ENCODE measurements at regions of chr3 and their contacts with region 1.

Region 1: DNA sequence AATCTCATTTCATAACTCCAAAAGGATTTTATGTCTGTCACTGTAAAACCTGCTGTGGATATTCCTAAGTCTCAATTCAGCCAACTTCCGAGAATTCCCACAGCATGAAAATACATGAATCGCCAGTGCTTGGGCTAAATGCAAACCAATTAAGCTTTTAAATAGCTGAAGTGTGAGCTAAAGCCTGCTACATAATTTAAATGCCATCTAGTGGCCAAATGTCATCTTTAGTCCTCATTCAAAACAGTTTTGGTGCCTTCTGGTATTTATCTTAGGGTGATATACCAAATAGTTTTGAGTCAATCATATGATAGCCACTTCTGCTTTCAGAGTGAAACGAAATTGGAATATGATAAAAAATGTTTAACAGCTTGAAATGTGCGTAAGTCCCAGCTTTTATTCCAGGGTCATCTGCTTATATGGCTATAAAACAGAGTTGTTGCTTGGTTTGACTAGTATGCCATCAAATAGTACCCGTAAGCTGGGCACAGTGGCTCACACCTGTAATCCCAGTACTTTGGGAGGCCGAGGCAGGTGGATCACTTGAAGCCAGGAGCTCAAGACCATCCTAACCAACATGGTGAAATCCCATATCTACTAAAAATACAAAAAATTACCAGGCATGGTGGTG is 41.8 kb upstream of the CCNL1 start:
- DNase-seq: no peak
- H3K4me3 ChIP-seq: no peak overlapping the region
- CTCF ChIP-seq: peak; percentile 25

Region 2: DNA sequence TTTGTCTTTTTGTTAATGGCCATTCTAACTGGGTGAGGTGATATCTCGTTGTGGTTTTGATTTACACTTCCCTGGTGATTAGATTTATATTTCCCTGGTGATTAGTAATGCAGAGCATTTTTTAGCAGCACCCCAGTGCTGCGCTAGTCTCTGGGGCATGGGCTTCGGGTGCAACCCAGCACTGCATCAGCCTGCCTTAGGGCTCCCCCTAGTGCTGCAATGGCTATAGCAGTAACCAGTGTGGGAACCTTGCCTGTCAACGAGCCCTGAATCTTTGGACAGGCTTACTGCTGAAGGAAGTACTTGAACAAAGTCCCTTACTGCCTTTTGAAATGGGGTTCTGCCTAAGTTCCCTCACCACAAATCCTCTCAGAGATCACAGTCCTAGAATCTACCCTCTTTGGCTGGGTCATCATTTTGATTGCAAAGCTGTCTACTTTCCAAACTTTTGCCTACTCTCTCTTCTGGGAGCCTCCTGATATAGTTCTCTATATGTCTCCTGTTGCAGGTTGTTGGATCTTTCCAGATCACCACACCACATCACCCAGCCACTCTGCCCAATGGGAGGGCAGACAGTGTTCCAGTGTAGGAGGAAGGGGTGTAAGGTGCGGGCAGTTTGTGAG is 37.4 kb after region 1 on chr3:
- CTCF ChIA-PET with region 1: interaction called, 17 read pairs
- POLR2A ChIA-PET with region 1: no interaction called
- DNase-seq: no peak
- H3K4me3 ChIP-seq: no peak overlapping the region
- CTCF ChIP-seq: peak; percentile 71

Region 3: GRCh38 chr3:157447026-157447694 is 245.4 kb after region 1 on chr3:
- CTCF ChIA-PET with region 1: interaction called, 13 read pairs
- POLR2A ChIA-PET with region 1: no interaction called
- DNase-seq: no peak
- H3K4me3 ChIP-seq: no peak overlapping the region
- CTCF ChIP-seq: peak; percentile 69

Region 4: DNA sequence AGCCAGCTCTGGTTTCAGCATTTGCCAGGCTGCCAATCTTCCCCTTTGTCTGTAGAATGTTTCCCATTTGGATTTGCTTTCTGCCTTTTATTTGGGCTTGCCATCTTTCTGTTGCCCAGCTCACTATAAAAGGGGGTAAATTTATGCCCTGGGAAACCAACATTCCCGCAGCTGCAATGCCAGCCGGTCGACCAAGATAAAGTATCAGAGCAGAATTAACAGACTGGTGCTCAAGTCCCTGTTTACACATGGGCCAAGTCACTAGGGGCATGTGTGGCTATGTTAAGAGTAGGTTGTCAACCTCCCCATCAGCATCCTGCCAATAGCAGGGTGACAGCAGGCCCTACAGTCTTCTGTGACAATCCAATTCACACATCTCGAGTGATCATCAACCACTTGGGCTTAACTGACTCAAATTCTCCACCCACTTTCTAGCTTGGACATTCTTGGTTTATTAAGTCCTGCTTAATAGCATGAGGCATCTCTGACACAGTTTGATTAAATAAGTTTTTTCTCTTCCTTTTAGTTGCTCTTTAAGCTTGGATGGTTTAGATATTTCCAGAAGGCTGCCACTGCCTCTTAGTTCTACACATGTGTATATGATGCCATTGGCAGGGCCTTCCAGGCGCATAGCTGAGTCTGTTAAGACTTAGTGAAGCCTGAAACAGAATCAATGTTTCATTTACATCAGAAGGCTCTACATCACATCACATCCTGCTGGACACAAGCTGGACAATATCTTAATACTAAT is 325.5 kb after region 1 on chr3:
- CTCF ChIA-PET with region 1: interaction called, 26 read pairs
- POLR2A ChIA-PET with region 1: no interaction called
- DNase-seq: no peak
- H3K4me3 ChIP-seq: no peak overlapping the region
- CTCF ChIP-seq: no peak

Region 5: GRCh38 chr3:157572559-157573270 is 371.0 kb after region 1 on chr3:
- CTCF ChIA-PET with region 1: interaction called, 19 read pairs
- POLR2A ChIA-PET with region 1: no interaction called
- DNase-seq: no peak
- H3K4me3 ChIP-seq: no peak overlapping the region
- CTCF ChIP-seq: peak; percentile 44

Measured in AG04449 (cell line).